ENCODE measurements at regions of chr12 and their contacts with region 1.

Region 1: GRCh38 chr12:68866950-68867349 is 59.0 kb downstream of the MDM2 start:
- DNase-seq: no peak
- ATAC-seq: no peak
- H3K4me3 ChIP-seq: no peak overlapping the region
- H3K27ac ChIP-seq: no peak overlapping the region
- H3K4me1 ChIP-seq: no peaks in the 10 kb centered on the region
- H3K27me3 ChIP-seq: no peaks in the 10 kb centered on the region
- CTCF ChIP-seq: no peak

Region 2: GRCh38 chr12:69015841-69016240 is 148.9 kb after region 1 on chr12:
- intact Hi-C with region 1: no loop called
- DNase-seq: no peak
- ATAC-seq: no peak
- H3K4me3 ChIP-seq: no peak overlapping the region
- H3K27ac ChIP-seq: no peak overlapping the region
- H3K4me1 ChIP-seq: no peaks in the 10 kb centered on the region
- H3K27me3 ChIP-seq: no peaks in the 10 kb centered on the region
- CTCF ChIP-seq: no peak

Region 3: GRCh38 chr12:69059483-69060457 is 192.8 kb after region 1 on chr12:
- intact Hi-C with region 1: loop called in 1 of 3 experiments (anchors 10 kb)
- DNase-seq: no peak
- ATAC-seq: no peak
- H3K4me3 ChIP-seq: no peak overlapping the region
- H3K27ac ChIP-seq: no peak overlapping the region
- H3K4me1 ChIP-seq: peaks cover 11 to 21% (median 21%) of the 10 kb centered on the region in 3 donors
- H3K27me3 ChIP-seq: no peaks in the 10 kb centered on the region
- CTCF ChIP-seq: no peak

Measured in pancreas (tissue), 10 donors.